Caco-2 (cell line): ENCODE measurements at regions of chr20 and their contacts with region 1.

Region 1: GRCh38 chr20:44092551-44093248 is 94.3 kb downstream of the JPH2 start:
- DNase-seq: peak; percentile 42 to 56
- H3K4me3 ChIP-seq: no peak overlapping the region
- H3K4me3 Mint-ChIP-seq: no peak overlapping the region
- H3K27ac Mint-ChIP-seq: no peak overlapping the region
- H3K4me1 ChIP-seq: peaks cover 10% of the 10 kb centered on the region
- H3K4me1 Mint-ChIP-seq: no peaks in the 10 kb centered on the region
- H3K27me3 ChIP-seq: no peaks in the 10 kb centered on the region
- H3K27me3 Mint-ChIP-seq: no peaks in the 10 kb centered on the region
- CTCF ChIP-seq: peak; percentile 44 to 78

Region 2: DNA sequence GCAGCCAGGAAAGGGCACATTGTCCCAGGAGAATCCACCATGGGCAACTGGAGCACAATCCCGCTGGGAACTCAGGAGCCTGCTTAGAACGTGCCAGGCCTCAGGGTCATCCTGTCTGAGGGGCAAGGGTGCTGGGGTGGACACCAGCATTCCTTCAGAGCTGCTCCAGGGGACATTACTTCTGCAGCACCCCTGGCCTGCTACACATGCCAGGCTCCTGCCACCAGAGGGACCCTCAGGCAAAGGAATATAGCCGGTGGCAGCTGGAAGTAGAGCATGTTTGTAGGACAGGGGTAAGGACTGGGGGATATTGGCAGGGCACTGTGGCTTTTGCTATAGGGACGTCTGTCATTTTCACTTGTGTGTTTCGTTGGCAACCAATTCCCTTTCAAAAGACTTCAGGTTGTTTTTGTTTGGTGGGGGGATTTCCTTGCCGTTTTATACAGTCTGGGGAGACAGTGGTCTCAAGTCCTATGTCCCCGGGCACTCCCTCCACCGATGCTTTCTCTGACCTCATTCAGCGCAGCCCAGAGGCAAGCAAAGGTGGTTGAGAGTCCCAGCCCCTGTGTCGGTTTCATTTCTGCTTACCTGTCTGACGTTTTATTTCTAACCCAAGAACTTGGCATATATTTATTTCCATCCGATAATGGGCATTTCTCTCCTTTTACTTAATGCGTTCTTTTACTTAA is 36.5 kb before region 1 on chr20:
- CTCF ChIA-PET with region 1: no interaction called
- POLR2A ChIA-PET with region 1: no interaction called
- intact Hi-C with region 1: loop called (anchors 1 kb)
- DNase-seq: peak; percentile 74 to 80
- H3K4me3 ChIP-seq: no peak overlapping the region
- H3K4me3 Mint-ChIP-seq: no peak overlapping the region
- H3K27ac Mint-ChIP-seq: no peak overlapping the region
- H3K4me1 ChIP-seq: no peaks in the 10 kb centered on the region
- H3K4me1 Mint-ChIP-seq: no peaks in the 10 kb centered on the region
- H3K27me3 ChIP-seq: no peaks in the 10 kb centered on the region
- H3K27me3 Mint-ChIP-seq: peaks cover 24% of the 10 kb centered on the region
- CTCF ChIP-seq: peak; percentile 91 to 94

Region 3: DNA sequence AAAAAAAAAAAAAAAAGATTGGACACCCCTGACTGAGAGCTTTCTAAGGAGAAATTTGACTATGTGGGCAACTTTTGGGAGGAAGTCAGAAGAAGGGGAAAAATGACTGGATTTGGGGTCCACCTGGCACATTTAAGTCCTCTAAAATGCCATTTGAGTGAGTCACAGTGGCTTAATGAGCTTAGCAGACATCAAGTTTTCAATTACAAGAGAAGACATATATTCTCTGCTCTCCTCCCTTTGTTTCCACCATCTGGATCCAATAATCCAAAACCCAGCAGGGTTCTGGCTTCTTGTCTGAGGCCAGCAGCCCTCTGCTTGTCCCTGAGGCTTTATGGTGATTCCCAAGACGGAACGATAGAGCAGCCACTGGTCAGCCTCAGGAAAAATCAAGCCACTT is 1088.9 kb after region 1 on chr20:
- CTCF ChIA-PET with region 1: no interaction called
- POLR2A ChIA-PET with region 1: no interaction called
- intact Hi-C with region 1: loop called (anchors 5 kb)
- DNase-seq: no peak
- H3K4me3 ChIP-seq: no peak overlapping the region
- H3K4me3 Mint-ChIP-seq: no peak overlapping the region
- H3K27ac Mint-ChIP-seq: no peak overlapping the region
- H3K4me1 ChIP-seq: no peaks in the 10 kb centered on the region
- H3K4me1 Mint-ChIP-seq: no peaks in the 10 kb centered on the region
- H3K27me3 ChIP-seq: no peaks in the 10 kb centered on the region; the same call in 1 of the 2 replicates
- H3K27me3 Mint-ChIP-seq: peaks cover 10% of the 10 kb centered on the region
- CTCF ChIP-seq: no peak